ENCODE measurements at regions of chr11 and their contacts with region 1.

Region 1: DNA sequence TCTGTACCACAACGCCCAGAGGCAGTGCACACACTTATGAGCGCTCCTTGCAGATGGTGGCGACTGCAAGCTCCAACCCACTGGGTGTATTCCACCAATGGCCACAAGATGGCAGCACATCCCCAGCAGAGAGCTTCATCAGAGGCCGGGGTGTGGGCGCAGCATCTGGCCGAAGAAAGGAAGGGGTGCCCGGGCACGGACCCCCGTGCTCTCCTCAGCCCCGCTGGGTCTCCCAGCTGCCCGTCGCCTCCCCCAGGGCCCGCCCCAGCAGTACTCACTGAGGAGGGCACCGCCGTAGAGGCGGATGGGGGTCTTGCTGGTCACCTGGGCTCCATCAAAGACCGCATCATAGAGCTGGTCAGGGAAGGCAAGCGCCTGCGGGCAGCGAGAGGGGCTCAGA is 14.2 kb downstream of the TP53I11 start:
- DNase-seq: peak; percentile 12
- H3K4me3 ChIP-seq: no peak overlapping the region
- CTCF ChIP-seq: peak; percentile 96

Region 2: GRCh38 chr11:44950625-44951476 is 14.3 kb after region 1 on chr11 and contains the start of gene TP53I11:
- CTCF ChIA-PET with region 1: interaction called, 89 read pairs
- POLR2A ChIA-PET with region 1: no interaction called
- DNase-seq: no peak
- H3K4me3 ChIP-seq: peak within 1 kb of the TSS; percentile 66
- CTCF ChIP-seq: peak; percentile 43

Region 3: GRCh38 chr11:45042557-45042956 is 106.0 kb after region 1 on chr11:
- CTCF ChIA-PET with region 1: no interaction called
- POLR2A ChIA-PET with region 1: no interaction called
- DNase-seq: no peak
- H3K4me3 ChIP-seq: no peak overlapping the region
- CTCF ChIP-seq: no peak

Region 4: GRCh38 chr11:45332276-45332934 is 395.9 kb after region 1 on chr11:
- CTCF ChIA-PET with region 1: interaction called, 18 read pairs
- POLR2A ChIA-PET with region 1: no interaction called
- DNase-seq: no peak
- H3K4me3 ChIP-seq: no peak overlapping the region
- CTCF ChIP-seq: peak; percentile 59